Calu3 (cell line): ENCODE measurements at regions of chr9 and their contacts with region 1.

Region 1: GRCh38 chr9:86637515-86637914 is 283.3 kb upstream of the TUT7 start:
- DNase-seq: peak; percentile 9
- H3K4me3 Mint-ChIP-seq: no peak overlapping the region
- H3K27ac Mint-ChIP-seq: no peak overlapping the region
- H3K4me1 Mint-ChIP-seq: peaks cover 9% of the 10 kb centered on the region
- H3K27me3 Mint-ChIP-seq: peaks cover 5% of the 10 kb centered on the region
- CTCF ChIP-seq: peak; percentile 50

Region 2: DNA sequence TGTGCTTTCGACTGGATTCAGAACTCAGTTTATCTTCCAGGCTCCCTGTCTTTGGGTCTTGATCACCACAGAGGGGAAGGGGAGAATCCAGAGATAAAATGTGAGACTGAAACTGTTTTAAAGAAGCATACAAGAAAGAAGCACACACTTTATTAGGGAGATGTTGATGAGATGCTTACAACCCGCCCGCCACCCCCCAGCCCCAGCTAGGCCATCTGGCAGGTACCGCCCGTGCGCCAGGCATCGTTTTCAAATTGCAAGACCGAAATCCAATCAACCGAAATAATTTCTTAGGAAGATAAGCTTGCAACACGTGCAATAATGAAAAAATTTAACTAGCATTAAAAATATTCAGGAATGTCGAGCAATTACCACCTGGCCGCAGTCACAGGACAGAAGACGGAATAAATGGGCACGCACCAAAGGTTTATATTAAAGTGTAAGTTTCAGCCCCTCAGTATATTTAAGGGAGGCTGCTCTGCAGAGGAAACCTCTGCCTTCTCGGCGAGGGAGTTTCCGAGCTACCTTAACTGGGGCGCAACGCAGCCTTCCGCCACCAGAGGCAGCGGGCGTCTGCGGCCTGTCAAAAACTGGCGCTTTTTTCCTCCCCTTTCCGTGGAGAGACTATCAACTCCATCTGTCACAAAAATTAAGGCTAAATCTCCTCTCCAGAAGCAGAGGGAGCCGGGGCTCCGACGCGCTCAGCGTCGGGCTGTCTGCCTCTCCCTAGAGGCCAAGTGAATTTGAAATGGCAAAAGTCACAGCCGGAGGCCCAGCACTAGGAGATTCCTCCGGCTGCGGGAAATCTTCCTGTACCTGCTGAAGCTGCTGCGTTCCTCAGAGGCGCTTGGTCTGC is 310.8 kb after region 1 on chr9:
- CTCF ChIA-PET with region 1: no interaction called
- intact Hi-C with region 1: loop called (anchors 10 kb)
- DNase-seq: peak; percentile 70
- H3K4me3 Mint-ChIP-seq: peak overlapping the region; percentile 69
- H3K27ac Mint-ChIP-seq: no peak overlapping the region
- H3K4me1 Mint-ChIP-seq: no peaks in the 10 kb centered on the region
- H3K27me3 Mint-ChIP-seq: peaks cover 53% of the 10 kb centered on the region
- CTCF ChIP-seq: peak; percentile 59